ENCODE measurements at regions of chr12 and their contacts with region 1.

Region 1: GRCh38 chr12:13362260-13362841 is 165.8 kb downstream of the EMP1 start:
- DNase-seq: peak; percentile 91
- H3K4me3 ChIP-seq: no peak overlapping the region
- H3K27ac ChIP-seq: no peak overlapping the region
- H3K4me1 ChIP-seq: no peaks in the 10 kb centered on the region
- H3K27me3 ChIP-seq: no peaks in the 10 kb centered on the region
- CTCF ChIP-seq: peak; percentile 58 to 79 (median 65)
- EP300 ChIP-seq: no peak
- POLR2A ChIP-seq: no peak

Region 2: DNA sequence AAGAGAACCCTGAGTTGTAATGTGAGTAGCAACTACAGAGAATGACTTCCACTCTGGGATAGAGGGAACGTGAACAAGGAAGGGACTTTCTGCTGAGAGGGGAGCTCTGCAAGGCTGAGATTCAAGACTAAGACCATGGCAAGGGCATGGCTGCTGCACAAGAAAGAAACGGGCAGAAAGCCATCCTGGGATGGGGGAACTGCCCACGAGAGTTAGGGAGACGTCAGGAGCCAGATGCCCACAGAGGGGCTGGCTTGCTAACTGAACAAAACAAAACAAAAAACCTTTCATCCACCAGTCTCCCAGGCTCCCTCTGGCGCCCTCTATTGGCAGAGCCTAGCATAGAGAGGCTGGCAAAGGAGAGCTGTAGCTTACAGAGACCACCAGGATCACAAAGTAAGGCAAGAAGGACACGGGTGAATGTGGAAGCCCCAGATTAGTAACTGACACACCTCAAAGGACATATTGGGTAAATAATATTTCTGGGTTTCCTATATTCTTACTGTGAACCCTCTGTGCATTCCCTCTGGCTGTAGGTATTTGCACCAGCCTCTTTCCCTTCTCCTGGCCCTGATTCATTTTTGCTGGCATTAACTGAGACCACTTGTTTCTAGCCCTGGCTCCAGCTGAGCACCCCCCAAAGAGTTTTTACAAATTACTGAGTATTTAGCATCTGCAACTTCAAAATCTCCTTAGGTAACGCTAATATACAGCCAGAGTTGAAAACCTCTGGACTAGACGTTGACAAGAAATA is 172.5 kb after region 1 on chr12:
- intact Hi-C with region 1: loop called (anchors 2 kb)
- DNase-seq: no peak
- H3K4me3 ChIP-seq: peak overlapping the region in 2 of 4 donors; percentile 14 to 17
- H3K27ac ChIP-seq: no peak overlapping the region
- H3K4me1 ChIP-seq: no peaks in the 10 kb centered on the region
- H3K27me3 ChIP-seq: no peaks in the 10 kb centered on the region
- CTCF ChIP-seq: peak; percentile 43 to 76 (median 72)
- EP300 ChIP-seq: no peak
- POLR2A ChIP-seq: no peak

Region 3: DNA sequence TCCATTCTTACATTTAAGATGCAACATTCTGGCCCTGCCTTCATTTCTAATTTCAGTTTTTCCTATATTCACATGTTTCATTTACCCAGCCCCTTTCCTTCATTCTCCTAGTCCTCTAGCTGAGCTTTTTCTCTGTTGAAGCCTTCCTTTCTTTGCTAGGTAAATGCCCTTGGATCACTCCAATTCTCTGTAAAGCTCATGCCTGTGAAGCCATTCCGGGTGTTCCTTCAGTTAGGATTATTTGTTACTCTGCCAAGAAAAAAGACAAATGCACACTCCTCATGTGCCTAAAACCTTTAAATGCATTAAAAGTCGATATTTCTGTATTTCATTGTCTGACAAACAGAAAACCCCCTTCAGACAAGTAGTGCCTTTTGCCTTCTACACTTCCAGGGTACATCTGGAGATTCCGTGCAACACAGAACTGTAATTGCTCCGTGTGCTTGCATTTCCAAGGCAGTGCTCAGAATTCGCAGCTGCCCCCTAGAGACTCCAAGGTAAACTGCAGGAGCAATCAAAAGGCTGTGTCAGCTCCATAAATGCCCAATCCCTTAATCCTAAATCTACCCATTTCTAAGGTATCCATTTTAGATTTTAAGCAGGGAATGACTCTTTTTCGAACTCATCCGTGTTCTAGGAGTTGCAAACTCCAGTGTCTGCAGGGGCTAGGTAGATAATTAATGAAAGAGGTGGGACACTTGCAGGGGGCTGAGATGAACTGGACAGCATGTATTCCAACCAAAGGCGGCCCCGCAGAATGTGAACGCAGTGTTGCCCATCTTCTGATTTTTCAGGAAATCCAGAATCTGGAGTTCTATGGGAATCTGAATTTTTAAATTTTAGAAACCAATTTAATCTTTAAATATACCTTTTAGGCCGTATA is 298.9 kb after region 1 on chr12:
- intact Hi-C with region 1: loop called (anchors 5 kb)
- DNase-seq: no peak
- H3K4me3 ChIP-seq: no peak overlapping the region
- H3K27ac ChIP-seq: no peak overlapping the region
- H3K4me1 ChIP-seq: no peaks in the 10 kb centered on the region
- H3K27me3 ChIP-seq: no peaks in the 10 kb centered on the region
- CTCF ChIP-seq: peak; percentile 61 to 85 (median 65)
- EP300 ChIP-seq: no peak
- POLR2A ChIP-seq: no peak